ENCODE measurements at regions of chr14 and their contacts with region 1.

Region 1: GRCh38 chr14:24160850-24161804 is at the start of gene IRF9:
- DNase-seq: peak; percentile 100
- H3K4me3 Mint-ChIP-seq: peak within 1 kb of the TSS; percentile 93
- H3K27ac Mint-ChIP-seq: peak within 1 kb of the TSS; percentile 97
- H3K4me1 Mint-ChIP-seq: peaks cover 51% of the 10 kb centered on the region
- H3K27me3 Mint-ChIP-seq: peaks cover 2% of the 10 kb centered on the region
- total RNA-seq, gene IRF9: 138 and 159 TPM in 2 replicates

Region 2: DNA sequence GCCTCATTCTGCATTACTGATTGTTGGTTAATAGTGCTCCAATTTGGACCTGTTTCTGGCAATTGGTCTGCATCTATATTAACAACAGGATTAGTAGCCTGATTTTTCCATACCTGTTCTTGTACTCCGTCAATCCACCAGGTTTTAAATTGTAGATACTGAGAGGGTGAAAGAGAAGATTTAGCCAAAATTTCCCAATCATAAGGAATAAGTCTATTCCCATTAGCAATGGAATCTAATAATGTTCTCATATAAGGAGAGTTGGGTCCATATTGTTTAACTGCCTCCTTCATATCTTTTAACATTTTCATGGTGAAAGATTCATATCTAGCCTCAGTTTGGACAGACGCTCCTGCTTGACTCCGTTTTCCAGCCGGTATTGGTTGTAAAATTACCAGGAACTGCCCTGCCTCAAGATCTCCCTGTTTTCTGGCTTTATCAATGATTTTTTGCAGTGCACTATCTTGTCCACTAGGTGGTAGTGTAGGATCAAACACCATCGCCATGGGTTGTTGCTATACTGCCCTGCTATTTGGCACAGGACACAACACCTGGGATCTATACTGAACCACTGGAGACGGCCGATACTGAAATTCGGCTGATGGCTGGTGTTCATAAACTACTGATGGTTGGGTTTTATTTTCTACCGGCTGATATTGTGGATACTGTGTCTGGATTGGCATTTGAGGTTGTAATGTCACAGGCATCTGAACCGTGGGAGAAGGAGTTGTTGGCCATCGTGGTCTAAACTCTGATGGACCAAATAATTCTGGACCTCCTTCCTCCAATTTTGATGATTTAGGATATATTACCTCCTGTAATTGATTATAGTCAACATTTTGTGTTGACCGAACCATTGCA is 147.2 kb before region 1 on chr14:
- intact Hi-C with region 1: loop called (anchors 5 kb)
- DNase-seq: peak; percentile 90
- H3K4me3 Mint-ChIP-seq: no peak overlapping the region
- H3K27ac Mint-ChIP-seq: no peak overlapping the region
- H3K4me1 Mint-ChIP-seq: peaks cover 22% of the 10 kb centered on the region
- H3K27me3 Mint-ChIP-seq: peaks cover 18% of the 10 kb centered on the region

Region 3: GRCh38 chr14:24093901-24094761 is 67.0 kb before region 1 on chr14 and contains the start of gene PCK2:
- intact Hi-C with region 1: loop called (anchors 1 kb)
- DNase-seq: peak; percentile 93
- H3K4me3 Mint-ChIP-seq: peak within 1 kb of the TSS; percentile 94
- H3K27ac Mint-ChIP-seq: peak within 1 kb of the TSS; percentile 94
- H3K4me1 Mint-ChIP-seq: peaks cover 34% of the 10 kb centered on the region
- H3K27me3 Mint-ChIP-seq: no peaks in the 10 kb centered on the region
- total RNA-seq, gene PCK2: 63.6 and 64.2 TPM in 2 replicates

Region 4: GRCh38 chr14:24141097-24141880 is 19.8 kb before region 1 on chr14 and contains the start of gene EMC9:
- intact Hi-C with region 1: loop called (anchors 1 kb)
- DNase-seq: peak; percentile 100
- H3K4me3 Mint-ChIP-seq: peak within 1 kb of the TSS; percentile 94
- H3K27ac Mint-ChIP-seq: peak within 1 kb of the TSS; percentile 94
- H3K4me1 Mint-ChIP-seq: peaks cover 69% of the 10 kb centered on the region
- H3K27me3 Mint-ChIP-seq: no peaks in the 10 kb centered on the region
- total RNA-seq, gene EMC9: 26.6 and 30.3 TPM in 2 replicates

Region 5: GRCh38 chr14:24188251-24189058 is 27.3 kb after region 1 on chr14 and contains the start of gene IPO4:
- intact Hi-C with region 1: loop called (anchors 1 kb)
- DNase-seq: peak; percentile 98
- H3K4me3 Mint-ChIP-seq: peak within 1 kb of the TSS; percentile 92
- H3K27ac Mint-ChIP-seq: peak within 1 kb of the TSS; percentile 93
- H3K4me1 Mint-ChIP-seq: peaks cover 33% of the 10 kb centered on the region
- H3K27me3 Mint-ChIP-seq: no peaks in the 10 kb centered on the region
- total RNA-seq, gene IPO4: 107 and 112 TPM in 2 replicates

Region 6: DNA sequence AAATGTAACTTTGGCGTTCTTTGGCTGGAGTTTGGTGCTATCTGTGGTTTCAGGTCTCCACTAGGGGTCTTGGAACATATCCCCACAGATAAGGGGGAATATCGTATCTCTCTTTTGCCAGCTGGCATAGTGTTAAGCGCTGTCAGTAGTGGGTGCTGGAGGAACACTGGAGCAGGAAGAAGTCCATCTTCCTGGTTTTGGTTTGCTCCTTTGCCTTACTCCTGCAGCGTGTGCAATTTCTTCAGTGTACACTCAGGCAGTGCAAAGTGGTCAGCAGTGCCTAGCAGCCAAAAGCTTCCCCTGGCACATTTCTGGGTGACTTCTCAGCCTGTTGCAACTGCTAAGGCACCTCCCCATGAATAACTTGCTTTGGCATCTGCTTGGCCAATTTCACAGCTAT is 190.4 kb after region 1 on chr14:
- intact Hi-C with region 1: no loop called
- DNase-seq: no peak
- H3K4me3 Mint-ChIP-seq: no peak overlapping the region
- H3K27ac Mint-ChIP-seq: no peak overlapping the region
- H3K4me1 Mint-ChIP-seq: peaks cover 3% of the 10 kb centered on the region
- H3K27me3 Mint-ChIP-seq: peaks cover 62% of the 10 kb centered on the region

Measured in activated CD4-positive, alpha-beta T cell treated with anti-CD3 and anti-CD28 coated beads, Interleukin-2, amount 10 ng/mL, durations not matched to agents 24 days and 14 days (primary cell).